Posterior vena cava (tissue), 2 donors: ENCODE measurements at regions of chr2 and their contacts with region 1.

Region 1: GRCh38 chr2:199136681-199137080 is 321.1 kb downstream of the SATB2 start:
- DNase-seq: no peak

Region 2: DNA sequence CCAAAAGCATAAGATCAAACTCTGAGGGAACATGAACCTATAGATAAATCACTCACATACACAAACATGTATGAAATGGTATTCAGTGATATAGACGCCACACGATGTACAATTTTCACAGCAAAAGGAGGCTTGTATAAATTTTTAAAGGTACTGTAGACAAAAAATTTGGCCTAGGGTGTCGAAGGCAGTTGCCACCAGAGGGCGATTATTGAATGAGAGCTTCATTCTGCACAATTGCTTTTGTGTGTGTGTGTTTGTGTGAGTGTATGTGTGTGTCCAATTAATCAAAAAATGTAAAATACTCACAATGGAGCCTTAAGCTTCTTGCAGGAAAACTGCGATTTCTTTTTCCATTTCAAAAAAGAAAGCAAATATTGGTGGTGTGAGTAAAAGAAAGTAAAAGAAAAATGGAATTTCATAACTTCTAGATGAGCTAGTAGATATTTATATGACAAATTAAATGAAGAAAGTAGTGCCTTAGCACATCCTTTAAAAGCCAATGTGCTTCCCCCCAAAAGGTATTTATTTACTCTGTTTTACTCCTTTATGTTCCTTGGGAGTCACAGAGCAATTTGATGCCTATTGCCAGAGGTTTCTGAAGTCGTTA is 479.1 kb before region 1 on chr2:
- intact Hi-C with region 1: loop called in 1 of 2 experiments (anchors 2 kb)
- DNase-seq: no peak